ENCODE measurements at regions of chr1 and their contacts with region 1.

Region 1: GRCh38 chr1:93437976-93438605 is 9.8 kb upstream of the FNBP1L start:
- DNase-seq: no peak
- H3K4me3 Mint-ChIP-seq: no peak overlapping the region
- H3K27ac Mint-ChIP-seq: no peak overlapping the region
- H3K4me1 Mint-ChIP-seq: no peaks in the 10 kb centered on the region
- H3K27me3 Mint-ChIP-seq: peaks cover 25% of the 10 kb centered on the region

Region 2: GRCh38 chr1:93304716-93305138 is 133.4 kb before region 1 on chr1:
- intact Hi-C with region 1: loop called (anchors 10 kb)
- DNase-seq: peak; percentile 86
- H3K4me3 Mint-ChIP-seq: no peak overlapping the region
- H3K27ac Mint-ChIP-seq: no peak overlapping the region
- H3K4me1 Mint-ChIP-seq: no peaks in the 10 kb centered on the region
- H3K27me3 Mint-ChIP-seq: no peaks in the 10 kb centered on the region

Region 3: GRCh38 chr1:93814059-93814794 is 376.1 kb after region 1 on chr1:
- intact Hi-C with region 1: loop called (anchors 1 kb)
- DNase-seq: peak; percentile 88
- H3K4me3 Mint-ChIP-seq: no peak overlapping the region
- H3K27ac Mint-ChIP-seq: no peak overlapping the region
- H3K4me1 Mint-ChIP-seq: peaks cover 13% of the 10 kb centered on the region
- H3K27me3 Mint-ChIP-seq: no peaks in the 10 kb centered on the region

Measured in activated CD4-positive, alpha-beta T cell treated with anti-CD3 and anti-CD28 coated beads, Interleukin-2, amount 10 ng/mL, durations not matched to agents 24 days and 14 days (primary cell).